Mammary epithelial cell (primary cell): ENCODE measurements at regions of chr1 and their contacts with region 1.

Region 1: DNA sequence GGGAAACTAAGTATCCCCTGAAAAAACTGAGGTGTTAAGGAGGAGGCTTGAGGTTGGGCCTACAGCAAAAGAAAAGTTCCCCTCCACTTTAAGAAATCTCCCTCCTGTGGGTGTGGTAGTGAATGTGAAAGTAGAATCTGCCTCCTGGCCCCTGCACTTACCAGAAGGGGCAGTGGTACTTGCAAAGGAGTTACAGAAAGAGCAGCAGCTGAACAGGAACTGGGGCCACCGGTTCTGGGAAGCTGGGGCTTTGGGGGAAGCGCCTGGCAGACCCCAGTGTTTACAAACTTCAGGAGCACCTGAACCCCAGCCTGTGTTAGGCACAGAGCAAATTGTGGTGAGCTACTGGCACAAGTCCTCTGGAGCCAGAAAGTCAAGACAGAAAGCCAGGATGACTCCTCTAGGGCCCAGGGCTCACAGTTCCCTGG is 250.2 kb upstream of the FGGY start:
- DNase-seq: no peak
- H3K4me3 ChIP-seq: no peak overlapping the region
- H3K27ac ChIP-seq: no peak overlapping the region
- H3K4me1 ChIP-seq: peaks cover 12% of the 10 kb centered on the region
- H3K27me3 ChIP-seq: no peaks in the 10 kb centered on the region
- CTCF ChIP-seq: no peak

Region 2: DNA sequence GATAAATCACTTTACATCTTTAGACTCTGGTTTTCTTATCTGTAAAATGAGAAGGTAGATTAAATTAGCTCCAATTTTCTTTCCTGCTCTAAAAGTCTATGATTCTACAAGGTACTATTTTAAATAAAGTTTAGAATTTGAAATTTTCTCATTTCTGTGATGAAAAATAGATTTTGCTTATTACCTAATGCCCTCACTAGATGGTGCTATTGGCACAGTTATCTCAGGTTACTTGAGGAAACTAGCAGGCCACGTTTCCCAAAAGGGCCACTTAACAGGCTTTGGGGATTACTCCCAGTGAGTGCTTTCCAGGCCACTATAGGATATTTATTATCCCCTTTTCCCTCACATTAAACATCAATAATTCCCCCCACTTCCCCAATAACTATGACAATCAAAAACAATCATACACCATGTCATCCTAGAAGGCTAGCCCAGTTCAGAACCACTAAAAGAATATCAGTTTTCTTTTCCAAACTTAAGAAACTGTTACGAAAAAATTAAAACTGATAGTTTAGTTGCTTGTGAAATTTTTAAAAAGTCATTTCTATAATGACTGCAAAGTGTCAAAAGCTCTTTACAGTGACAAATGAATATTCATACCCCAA is 530.8 kb before region 1 on chr1:
- CTCF ChIA-PET with region 1: no interaction called
- dilution Hi-C with region 1: no loop called
- in situ Hi-C with region 1: no loop called
- intact Hi-C with region 1: loop called (anchors 5 kb)
- DNase-seq: peak; percentile 51
- H3K4me3 ChIP-seq: no peak overlapping the region
- H3K27ac ChIP-seq: no peak overlapping the region
- H3K4me1 ChIP-seq: no peaks in the 10 kb centered on the region
- H3K27me3 ChIP-seq: no peaks in the 10 kb centered on the region
- CTCF ChIP-seq: peak; percentile 46 to 60

Region 3: GRCh38 chr1:58823481-58824010 is 223.2 kb before region 1 on chr1:
- CTCF ChIA-PET with region 1: no interaction called
- dilution Hi-C with region 1: no loop called
- in situ Hi-C with region 1: no loop called
- intact Hi-C with region 1: no loop called
- DNase-seq: peak; percentile 88
- H3K4me3 ChIP-seq: no peak overlapping the region
- H3K27ac ChIP-seq: no peak overlapping the region
- H3K4me1 ChIP-seq: peaks cover 33% of the 10 kb centered on the region
- H3K27me3 ChIP-seq: no peaks in the 10 kb centered on the region
- CTCF ChIP-seq: no peak

Region 4: GRCh38 chr1:58919959-58920321 is 126.8 kb before region 1 on chr1:
- CTCF ChIA-PET with region 1: no interaction called
- dilution Hi-C with region 1: no loop called
- in situ Hi-C with region 1: no loop called
- intact Hi-C with region 1: no loop called
- DNase-seq: no peak
- H3K4me3 ChIP-seq: no peak overlapping the region
- H3K27ac ChIP-seq: no peak overlapping the region
- H3K4me1 ChIP-seq: peaks cover 17% of the 10 kb centered on the region
- H3K27me3 ChIP-seq: no peaks in the 10 kb centered on the region
- CTCF ChIP-seq: no peak

Region 5: DNA sequence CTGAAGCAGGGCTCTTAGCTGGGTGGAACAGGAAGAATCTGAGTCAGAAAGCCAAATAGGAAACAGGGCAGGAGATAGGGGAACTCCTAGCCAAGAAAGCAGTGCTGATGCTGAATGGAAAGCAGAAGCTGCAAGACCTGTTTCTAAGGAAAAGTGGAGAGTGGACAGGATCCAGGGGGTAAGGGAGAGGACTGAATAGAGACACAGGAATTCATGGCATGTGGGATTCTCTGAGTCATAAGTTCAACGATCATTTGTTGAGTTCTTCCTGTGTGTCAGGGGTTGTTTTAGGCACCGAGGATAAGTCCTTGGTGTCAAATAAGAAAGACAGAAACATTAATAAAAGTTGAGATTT is 96.4 kb after region 1 on chr1:
- CTCF ChIA-PET with region 1: no interaction called
- dilution Hi-C with region 1: no loop called
- in situ Hi-C with region 1: no loop called
- intact Hi-C with region 1: loop called (anchors 5 kb)
- DNase-seq: peak; percentile 95
- H3K4me3 ChIP-seq: no peak overlapping the region
- H3K27ac ChIP-seq: peak overlapping the region; percentile 60
- H3K4me1 ChIP-seq: peaks cover 56% of the 10 kb centered on the region
- H3K27me3 ChIP-seq: no peaks in the 10 kb centered on the region
- CTCF ChIP-seq: no peak